BJ (cell line): ENCODE measurements at regions of chr6 and their contacts with region 1.

Region 1: DNA sequence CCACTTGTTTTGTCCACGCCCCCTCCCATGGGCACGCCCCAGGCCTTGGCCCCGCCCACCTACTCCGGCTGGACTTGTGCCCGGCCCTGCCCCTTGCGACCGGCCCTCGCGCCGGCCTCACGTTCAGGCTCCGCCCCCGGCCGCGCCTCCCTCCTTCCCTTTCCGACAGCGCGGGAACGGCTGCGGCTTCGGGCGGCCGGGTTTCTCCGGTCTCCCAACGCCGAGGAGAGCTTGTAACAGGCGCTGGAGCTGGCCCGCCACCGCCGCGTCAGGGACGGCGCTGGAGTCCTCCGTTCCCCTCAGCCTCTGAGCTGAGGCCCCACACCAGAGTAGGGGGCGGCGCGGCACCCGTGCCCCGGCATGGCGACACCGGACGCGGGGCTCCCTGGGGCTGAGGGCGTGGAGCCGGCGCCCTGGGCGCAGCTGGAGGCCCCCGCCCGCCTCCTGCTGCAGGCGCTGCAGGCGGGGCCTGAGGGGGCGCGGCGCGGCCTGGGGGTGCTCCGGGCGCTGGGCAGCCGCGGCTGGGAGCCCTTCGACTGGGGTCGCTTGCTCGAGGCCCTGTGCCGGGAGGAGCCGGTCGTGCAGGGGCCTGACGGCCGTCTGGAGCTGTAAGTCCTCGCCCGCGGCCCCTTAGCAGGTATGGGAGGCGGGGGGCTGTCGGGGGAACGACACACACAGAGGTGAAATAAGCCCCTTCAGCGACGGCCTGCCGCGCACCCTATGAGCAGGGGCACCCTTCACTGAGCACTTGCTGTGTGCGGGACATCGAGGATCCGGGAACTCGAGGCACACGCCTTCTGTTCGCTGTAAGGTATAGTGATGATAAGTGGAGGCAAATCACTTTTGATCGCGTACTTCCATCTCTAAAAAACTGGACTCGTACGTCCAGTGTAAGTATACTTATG is at the start of gene FANCE:
- DNase-seq: peak; percentile 61
- H3K4me3 ChIP-seq: peak within 1 kb of the TSS; percentile 70
- H3K27me3 ChIP-seq: no peaks in the 10 kb centered on the region
- CTCF ChIP-seq: no peak
- polyA plus RNA-seq, gene FANCE: 8.9 and 11.7 TPM in 2 replicates

Region 2: DNA sequence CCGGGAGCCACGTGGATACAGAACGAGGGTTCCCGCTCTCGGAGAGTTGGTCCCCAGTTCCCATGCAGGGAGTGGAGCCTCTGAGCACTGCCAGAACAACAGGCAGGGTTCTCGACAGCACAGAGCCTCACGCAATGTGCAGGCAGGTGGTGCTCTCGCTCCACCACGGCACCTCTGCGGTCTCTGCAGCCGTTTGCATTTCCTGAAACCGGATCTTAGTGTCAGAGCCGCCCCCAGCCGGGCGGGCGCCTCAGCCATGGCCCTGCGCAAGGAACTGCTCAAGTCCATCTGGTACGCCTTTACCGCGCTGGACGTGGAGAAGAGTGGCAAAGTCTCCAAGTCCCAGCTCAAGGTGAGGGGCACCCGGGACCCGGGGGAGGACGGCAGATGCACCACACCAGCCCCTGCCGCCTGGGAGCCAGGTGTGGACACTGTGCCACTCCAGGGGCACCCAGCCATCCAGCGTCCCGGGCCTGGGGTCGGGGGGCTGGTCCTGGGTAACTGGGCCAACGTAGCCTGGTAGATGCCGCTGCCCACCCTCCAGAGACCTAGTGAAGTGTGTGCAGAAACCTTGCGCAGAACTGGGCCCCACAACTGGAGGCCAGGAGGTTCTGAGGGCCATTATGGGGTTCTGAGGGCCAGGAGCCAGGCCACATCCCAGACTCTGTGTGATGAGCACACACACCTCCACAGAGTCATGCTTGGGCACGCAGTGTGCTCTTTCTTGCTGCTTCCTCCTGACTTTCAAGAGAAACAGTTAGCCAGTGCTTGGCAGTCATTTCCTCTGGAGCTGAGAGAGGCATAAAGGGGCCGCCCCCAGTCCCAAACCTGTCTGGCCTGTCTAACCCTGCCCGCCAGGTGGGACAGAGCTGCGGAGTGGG is 154.6 kb before region 1 on chr6 and contains the start of gene DEF6:
- CTCF ChIA-PET with region 1: interaction called, 26 read pairs
- POLR2A ChIA-PET with region 1: no interaction called
- DNase-seq: no peak
- H3K4me3 ChIP-seq: peak within 1 kb of the TSS; percentile 47
- H3K27me3 ChIP-seq: no peaks in the 10 kb centered on the region
- CTCF ChIP-seq: peak; percentile 73
- polyA plus RNA-seq, gene DEF6: 3.7 and 4.1 TPM in 2 replicates

Region 3: GRCh38 chr6:35342258-35343091 is 110.0 kb before region 1 on chr6 and contains the start of gene PPARD:
- CTCF ChIA-PET with region 1: interaction called, 144 read pairs
- POLR2A ChIA-PET with region 1: no interaction called
- DNase-seq: peak; percentile 69
- H3K4me3 ChIP-seq: peak within 1 kb of the TSS; percentile 86
- H3K27me3 ChIP-seq: no peaks in the 10 kb centered on the region
- CTCF ChIP-seq: peak; percentile 97
- polyA plus RNA-seq, gene PPARD: 22.8 and 40.9 TPM in 2 replicates

Region 4: GRCh38 chr6:35415065-35415991 is 37.1 kb before region 1 on chr6:
- CTCF ChIA-PET with region 1: interaction called, 52 read pairs
- POLR2A ChIA-PET with region 1: no interaction called
- DNase-seq: no peak
- H3K4me3 ChIP-seq: no peak overlapping the region
- H3K27me3 ChIP-seq: no peaks in the 10 kb centered on the region
- CTCF ChIP-seq: peak; percentile 66

Region 5: DNA sequence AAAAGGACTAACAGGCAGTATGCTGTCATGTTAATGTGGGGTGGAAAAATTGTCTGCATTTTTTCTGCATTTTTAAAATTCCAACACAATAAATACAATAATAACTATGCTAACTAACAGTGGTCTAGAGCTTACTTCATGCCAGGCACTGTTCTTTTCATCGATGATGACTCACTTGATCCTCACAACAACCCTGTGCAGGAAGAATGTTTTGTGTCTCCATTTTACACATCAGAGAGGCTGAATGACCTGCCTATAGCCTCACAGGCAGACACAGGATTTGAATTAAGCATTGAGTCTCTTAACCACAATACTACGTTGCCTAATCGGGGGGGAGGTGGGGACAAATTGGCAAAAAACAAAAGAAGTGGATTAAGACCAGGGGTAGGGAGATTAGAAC is 27.2 kb before region 1 on chr6:
- CTCF ChIA-PET with region 1: interaction called, 52 read pairs
- POLR2A ChIA-PET with region 1: no interaction called
- DNase-seq: peak; percentile 85
- H3K4me3 ChIP-seq: no peak overlapping the region
- H3K27me3 ChIP-seq: no peaks in the 10 kb centered on the region
- CTCF ChIP-seq: no peak

Region 6: DNA sequence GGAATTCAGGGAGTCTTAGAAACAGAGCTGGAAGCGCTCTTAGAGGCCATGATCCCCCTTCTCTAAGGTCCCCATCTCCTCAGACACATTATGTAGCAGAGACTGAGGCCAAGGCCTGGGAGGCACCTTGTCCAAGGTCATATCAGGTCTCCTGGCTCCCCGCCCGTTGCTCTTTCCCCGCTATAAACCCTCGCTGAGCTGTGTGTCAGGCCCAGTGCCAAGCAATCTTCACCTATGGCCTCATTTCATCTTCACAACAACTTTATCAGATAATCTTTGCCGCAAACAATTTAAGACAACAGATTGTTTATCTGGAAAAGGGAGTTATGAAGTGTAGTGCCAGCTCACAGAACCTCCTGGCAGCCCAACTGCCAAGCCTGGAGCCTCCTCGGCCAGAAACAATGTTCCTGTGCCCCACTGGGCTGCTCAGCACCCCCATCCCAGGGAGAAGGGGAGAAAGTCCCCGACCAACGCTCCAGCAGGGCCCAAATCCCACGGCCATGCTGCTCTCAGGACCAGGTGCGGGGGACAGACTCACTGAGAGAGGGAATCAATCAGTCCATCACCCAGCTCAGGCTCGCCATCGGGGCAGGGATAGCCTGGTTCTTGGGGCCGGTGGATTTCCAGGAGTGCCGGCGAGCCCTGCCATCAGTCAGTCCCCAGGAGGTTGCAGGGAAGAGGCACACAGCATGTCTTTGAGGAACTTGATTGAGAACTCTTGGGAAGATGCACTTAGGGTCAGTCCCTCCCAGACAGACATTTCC is 17.2 kb before region 1 on chr6:
- CTCF ChIA-PET with region 1: interaction called, 24 read pairs
- POLR2A ChIA-PET with region 1: no interaction called
- DNase-seq: no peak
- H3K4me3 ChIP-seq: no peak overlapping the region
- H3K27me3 ChIP-seq: no peaks in the 10 kb centered on the region
- CTCF ChIP-seq: no peak

Region 7: GRCh38 chr6:35468181-35468979 is 15.9 kb after region 1 on chr6 and contains the start of gene RPL10A:
- CTCF ChIA-PET with region 1: interaction called, 22 read pairs
- POLR2A ChIA-PET with region 1: interaction called, 4 read pairs
- DNase-seq: peak; percentile 79
- H3K4me3 ChIP-seq: peak within 1 kb of the TSS; percentile 80
- H3K27me3 ChIP-seq: no peaks in the 10 kb centered on the region
- CTCF ChIP-seq: peak; percentile 100
- polyA plus RNA-seq, gene RPL10A: 2,524 and 2,691 TPM in 2 replicates